CD4-positive, alpha-beta T cell (primary cell): ENCODE measurements at regions of chr6 and their contacts with region 1.

Region 1: GRCh38 chr6:391559-392440 is at the start of gene IRF4:
- DNase-seq: peak in 12 of 14 experiments; percentile 33 to 76 (median 44)
- ATAC-seq: peak; percentile 33
- H3K4me3 ChIP-seq: peak within 1 kb of the TSS; percentile 80
- H3K4me3 Mint-ChIP-seq: peak within 1 kb of the TSS; percentile 96
- H3K27ac ChIP-seq: no peak within 1 kb of the TSS
- H3K27ac Mint-ChIP-seq: peak within 1 kb of the TSS; percentile 79
- H3K4me1 ChIP-seq: peaks cover 38% of the 10 kb centered on the region
- H3K4me1 Mint-ChIP-seq: peaks cover 33% of the 10 kb centered on the region
- H3K27me3 ChIP-seq: no peaks in the 10 kb centered on the region
- H3K27me3 Mint-ChIP-seq: peaks cover 9% of the 10 kb centered on the region
- CTCF ChIP-seq: no peak
- total RNA-seq, gene IRF4: 16.9 to 20.8 TPM

Region 2: GRCh38 chr6:251920-252319 is 139.9 kb before region 1 on chr6:
- CTCF ChIA-PET with region 1: no interaction called
- POLR2A ChIA-PET with region 1: no interaction called
- intact Hi-C with region 1: no loop called
- DNase-seq: peak in 2 of 14 experiments; percentile 32 to 36
- ATAC-seq: no peak
- H3K4me3 ChIP-seq: no peak overlapping the region
- H3K4me3 Mint-ChIP-seq: no peak overlapping the region
- H3K27ac ChIP-seq: no peak overlapping the region
- H3K27ac Mint-ChIP-seq: no peak overlapping the region
- H3K4me1 ChIP-seq: peaks cover 7% of the 10 kb centered on the region
- H3K4me1 Mint-ChIP-seq: peaks cover 28% of the 10 kb centered on the region
- H3K27me3 ChIP-seq: no peaks in the 10 kb centered on the region
- H3K27me3 Mint-ChIP-seq: no peaks in the 10 kb centered on the region
- CTCF ChIP-seq: no peak

Region 3: DNA sequence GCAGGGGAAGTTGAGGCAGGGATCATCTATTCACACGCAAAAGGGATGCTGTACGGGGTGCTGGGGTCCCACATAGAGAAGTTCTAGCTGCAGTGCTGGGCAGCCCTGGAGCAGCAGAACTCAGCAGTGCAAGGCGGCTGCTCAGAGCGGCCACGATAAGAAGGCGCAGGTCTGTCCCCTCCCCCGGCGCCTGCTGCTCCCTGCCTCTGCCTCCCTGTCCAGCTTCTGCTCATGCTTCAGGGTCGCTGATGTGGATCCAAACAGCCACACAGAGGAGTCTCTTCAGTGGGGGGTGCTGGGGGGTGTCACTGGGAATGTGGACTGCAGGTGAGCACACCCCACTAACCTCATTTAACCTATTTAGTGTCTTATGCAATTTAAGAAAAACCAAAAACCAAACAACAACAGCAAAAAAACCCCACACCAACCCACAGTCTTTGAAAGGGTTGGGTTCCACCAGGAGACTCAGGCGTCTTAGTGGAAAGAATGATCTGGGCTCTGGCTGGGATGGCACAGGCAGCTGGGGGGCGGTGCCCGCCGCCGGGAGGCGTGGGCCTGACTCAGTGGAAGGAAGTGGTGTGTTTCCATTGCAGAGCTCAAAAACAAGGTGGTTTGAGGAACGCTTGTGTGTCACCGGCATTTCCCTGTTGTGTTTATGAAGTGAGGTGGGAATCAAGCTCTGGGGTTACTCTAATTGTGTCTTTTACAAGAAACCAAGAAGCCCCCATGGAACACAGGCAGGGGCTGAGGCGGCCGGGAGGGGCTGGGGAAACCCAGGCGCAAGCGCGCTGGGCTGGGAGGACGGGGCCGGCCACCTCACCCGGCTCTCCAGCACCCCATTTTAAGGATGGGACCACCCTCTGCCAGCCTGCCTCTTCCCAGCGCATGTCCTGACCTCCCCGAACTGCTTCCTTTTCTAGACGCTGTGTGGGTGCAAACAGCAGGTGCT is 54.9 kb after region 1 on chr6:
- CTCF ChIA-PET with region 1: no interaction called
- POLR2A ChIA-PET with region 1: interaction called, 65 read pairs
- intact Hi-C with region 1: loop called in 1 of 2 experiments (anchors 5 kb)
- DNase-seq: peak; percentile 40 to 88 (median 79)
- ATAC-seq: peak; percentile 74
- H3K4me3 ChIP-seq: peak overlapping the region; percentile 45
- H3K4me3 Mint-ChIP-seq: peak overlapping the region; percentile 87
- H3K27ac ChIP-seq: peak overlapping the region in 1 of 2 donors; percentile 59
- H3K27ac Mint-ChIP-seq: peak overlapping the region; percentile 81
- H3K4me1 ChIP-seq: peaks cover 47% of the 10 kb centered on the region
- H3K4me1 Mint-ChIP-seq: peaks cover 56% of the 10 kb centered on the region
- H3K27me3 ChIP-seq: no peaks in the 10 kb centered on the region
- H3K27me3 Mint-ChIP-seq: no peaks in the 10 kb centered on the region
- CTCF ChIP-seq: no peak

Region 4: GRCh38 chr6:474453-475185 is 82.8 kb after region 1 on chr6:
- CTCF ChIA-PET with region 1: no interaction called
- POLR2A ChIA-PET with region 1: no interaction called
- intact Hi-C with region 1: no loop called
- DNase-seq: peak; percentile 42 to 90 (median 68)
- ATAC-seq: peak; percentile 100
- H3K4me3 ChIP-seq: peak overlapping the region; percentile 12
- H3K4me3 Mint-ChIP-seq: peak overlapping the region; percentile 39
- H3K27ac ChIP-seq: no peak overlapping the region
- H3K27ac Mint-ChIP-seq: no peak overlapping the region
- H3K4me1 ChIP-seq: peaks cover 24% of the 10 kb centered on the region
- H3K4me1 Mint-ChIP-seq: peaks cover 53% of the 10 kb centered on the region
- H3K27me3 ChIP-seq: no peaks in the 10 kb centered on the region
- H3K27me3 Mint-ChIP-seq: no peaks in the 10 kb centered on the region
- CTCF ChIP-seq: no peak

Region 5: DNA sequence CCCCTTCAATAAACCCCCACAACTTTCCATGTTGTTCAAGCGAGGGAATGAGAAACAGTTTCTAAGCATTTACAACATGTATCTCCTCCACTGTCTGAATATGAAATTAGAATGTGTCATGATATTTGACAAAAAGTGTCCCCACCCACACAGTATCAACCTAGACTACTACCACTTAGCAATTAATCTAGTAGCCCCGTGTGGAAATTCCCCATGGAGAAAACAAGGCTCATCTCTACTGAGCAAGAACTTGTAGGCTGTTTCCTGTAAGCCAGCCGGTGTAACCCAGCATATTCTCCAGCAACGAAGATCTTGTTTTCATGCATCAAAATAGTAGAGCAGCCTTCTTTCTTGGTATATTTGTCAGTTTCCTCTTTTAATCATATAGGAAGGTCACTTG is 114.7 kb after region 1 on chr6:
- CTCF ChIA-PET with region 1: no interaction called
- POLR2A ChIA-PET with region 1: no interaction called
- intact Hi-C with region 1: loop called in 1 of 2 experiments (anchors 5 kb)
- DNase-seq: peak in 1 of 14 experiments; percentile 14
- ATAC-seq: no peak
- H3K4me3 ChIP-seq: no peak overlapping the region
- H3K4me3 Mint-ChIP-seq: peak overlapping the region; percentile 23
- H3K27ac ChIP-seq: no peak overlapping the region
- H3K27ac Mint-ChIP-seq: peak overlapping the region; percentile 58
- H3K4me1 ChIP-seq: peaks cover 17% of the 10 kb centered on the region
- H3K4me1 Mint-ChIP-seq: peaks cover 81% of the 10 kb centered on the region
- H3K27me3 ChIP-seq: no peaks in the 10 kb centered on the region
- H3K27me3 Mint-ChIP-seq: no peaks in the 10 kb centered on the region
- CTCF ChIP-seq: no peak

Region 6: GRCh38 chr6:524803-525202 is 133.0 kb after region 1 on chr6:
- CTCF ChIA-PET with region 1: interaction called, 3 read pairs
- POLR2A ChIA-PET with region 1: interaction called, 3 read pairs
- intact Hi-C with region 1: loop called in 1 of 2 experiments (anchors 5 kb)
- DNase-seq: peak in 11 of 14 experiments; percentile 10 to 67 (median 39)
- ATAC-seq: no peak
- H3K4me3 ChIP-seq: no peak overlapping the region
- H3K4me3 Mint-ChIP-seq: no peak overlapping the region
- H3K27ac ChIP-seq: no peak overlapping the region
- H3K27ac Mint-ChIP-seq: no peak overlapping the region
- H3K4me1 ChIP-seq: no peaks in the 10 kb centered on the region
- H3K4me1 Mint-ChIP-seq: peaks cover 6% of the 10 kb centered on the region
- H3K27me3 ChIP-seq: no peaks in the 10 kb centered on the region
- H3K27me3 Mint-ChIP-seq: no peaks in the 10 kb centered on the region
- CTCF ChIP-seq: peak; percentile 19

Region 7: GRCh38 chr6:558089-558488 is 166.3 kb after region 1 on chr6:
- CTCF ChIA-PET with region 1: interaction called, 3 read pairs
- POLR2A ChIA-PET with region 1: no interaction called
- intact Hi-C with region 1: loop called in 1 of 2 experiments (anchors 1 kb)
- DNase-seq: no peak
- ATAC-seq: no peak
- H3K4me3 ChIP-seq: no peak overlapping the region
- H3K4me3 Mint-ChIP-seq: no peak overlapping the region
- H3K27ac ChIP-seq: no peak overlapping the region
- H3K27ac Mint-ChIP-seq: peak overlapping the region; percentile 14
- H3K4me1 ChIP-seq: peaks cover 9% of the 10 kb centered on the region
- H3K4me1 Mint-ChIP-seq: peaks cover 22% of the 10 kb centered on the region
- H3K27me3 ChIP-seq: no peaks in the 10 kb centered on the region
- H3K27me3 Mint-ChIP-seq: no peaks in the 10 kb centered on the region
- CTCF ChIP-seq: peak; percentile 26

Region 8: GRCh38 chr6:683742-684440 is 292.1 kb after region 1 on chr6:
- CTCF ChIA-PET with region 1: no interaction called
- POLR2A ChIA-PET with region 1: no interaction called
- intact Hi-C with region 1: no loop called
- DNase-seq: peak in 1 of 14 experiments; percentile 15
- ATAC-seq: no peak
- H3K4me3 ChIP-seq: no peak overlapping the region
- H3K4me3 Mint-ChIP-seq: peak overlapping the region; percentile 27
- H3K27ac ChIP-seq: no peak overlapping the region
- H3K27ac Mint-ChIP-seq: no peak overlapping the region
- H3K4me1 ChIP-seq: peaks cover 27% of the 10 kb centered on the region
- H3K4me1 Mint-ChIP-seq: peaks cover 55% of the 10 kb centered on the region
- H3K27me3 ChIP-seq: no peaks in the 10 kb centered on the region
- H3K27me3 Mint-ChIP-seq: no peaks in the 10 kb centered on the region
- CTCF ChIP-seq: no peak

Region 9: GRCh38 chr6:1381481-1382330 is 989.9 kb after region 1 on chr6:
- CTCF ChIA-PET with region 1: no interaction called
- POLR2A ChIA-PET with region 1: no interaction called
- intact Hi-C with region 1: loop called in 1 of 2 experiments (anchors 5 kb)
- DNase-seq: peak in 13 of 14 experiments; percentile 19 to 70 (median 48)
- ATAC-seq: peak; percentile 67
- H3K4me3 ChIP-seq: no peak overlapping the region
- H3K4me3 Mint-ChIP-seq: no peak overlapping the region
- H3K27ac ChIP-seq: no peak overlapping the region
- H3K27ac Mint-ChIP-seq: no peak overlapping the region
- H3K4me1 ChIP-seq: peaks cover 37% of the 10 kb centered on the region
- H3K4me1 Mint-ChIP-seq: peaks cover 43% of the 10 kb centered on the region
- H3K27me3 ChIP-seq: peaks cover 75 to 96% of the 10 kb centered on the region in 2 experiments
- H3K27me3 Mint-ChIP-seq: peaks cover 72% of the 10 kb centered on the region
- CTCF ChIP-seq: peak; percentile 47

Region 10: GRCh38 chr6:1396952-1397868 is 1005.4 kb after region 1 on chr6:
- CTCF ChIA-PET with region 1: no interaction called
- POLR2A ChIA-PET with region 1: no interaction called
- intact Hi-C with region 1: loop called in 1 of 2 experiments (anchors 5 kb)
- DNase-seq: peak; percentile 47 to 81 (median 63)
- ATAC-seq: peak; percentile 63
- H3K4me3 ChIP-seq: no peak overlapping the region
- H3K4me3 Mint-ChIP-seq: no peak overlapping the region
- H3K27ac ChIP-seq: no peak overlapping the region
- H3K27ac Mint-ChIP-seq: no peak overlapping the region
- H3K4me1 ChIP-seq: peaks cover 14% of the 10 kb centered on the region
- H3K4me1 Mint-ChIP-seq: peaks cover 12% of the 10 kb centered on the region
- H3K27me3 ChIP-seq: peaks cover 45 to 84% of the 10 kb centered on the region in 2 experiments
- H3K27me3 Mint-ChIP-seq: peaks cover 72% of the 10 kb centered on the region
- CTCF ChIP-seq: peak; percentile 96